ENCODE measurements at regions of chr2 and their contacts with region 1.

Region 1: DNA sequence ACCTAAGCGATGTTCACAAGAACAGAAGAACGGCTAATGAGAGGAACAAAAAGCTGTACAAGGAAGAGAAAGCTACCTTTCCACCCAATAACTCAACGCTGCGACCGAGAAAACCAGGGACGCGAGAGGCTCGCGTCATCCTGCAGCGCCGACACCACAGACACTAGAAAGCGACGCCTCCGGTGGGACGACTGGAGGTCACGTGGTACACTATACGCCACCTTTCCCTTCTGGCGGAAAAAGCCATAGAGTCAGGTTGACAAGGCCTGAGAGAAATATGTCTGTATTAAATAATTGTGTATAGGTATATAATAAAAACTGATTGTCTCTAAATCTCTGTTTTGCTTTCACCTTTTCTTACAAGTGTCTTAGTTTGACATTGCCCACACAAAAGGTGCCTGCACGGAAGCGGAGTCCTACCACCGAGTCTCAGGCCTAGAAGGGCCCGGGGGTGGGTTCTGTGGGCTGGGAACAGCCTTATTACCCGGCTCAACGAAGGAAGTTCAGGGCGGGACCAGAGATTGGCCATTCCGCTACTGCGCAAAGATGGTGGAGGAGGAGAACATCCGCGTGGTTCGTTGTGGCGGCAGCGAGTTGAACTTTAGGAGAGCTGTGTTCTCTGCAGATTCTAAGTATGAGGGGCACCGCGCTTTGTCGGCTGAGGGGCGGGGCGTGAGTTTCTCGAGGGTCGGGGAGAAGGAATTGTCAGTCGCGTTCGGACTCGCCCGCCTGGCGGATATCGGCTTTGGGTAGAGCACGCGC is at the start of gene WDR75:
- DNase-seq: peak; percentile 79
- ATAC-seq: peak; percentile 94
- H3K4me3 Mint-ChIP-seq: peak within 1 kb of the TSS; percentile 98
- H3K27ac Mint-ChIP-seq: peak within 1 kb of the TSS; percentile 99
- H3K4me1 Mint-ChIP-seq: peaks cover 26% of the 10 kb centered on the region
- H3K27me3 Mint-ChIP-seq: no peaks in the 10 kb centered on the region
- CTCF ChIP-seq: no peak
- total RNA-seq, gene WDR75: 53.0 and 61.2 TPM in 2 replicates

Region 2: GRCh38 chr2:189580658-189581353 is 139.7 kb after region 1 on chr2 and contains the start of gene SLC40A1:
- CTCF ChIA-PET with region 1: no interaction called
- POLR2A ChIA-PET with region 1: no interaction called
- intact Hi-C with region 1: loop called (anchors 1 kb)
- DNase-seq: peak; percentile 24
- ATAC-seq: peak; percentile 95
- H3K4me3 Mint-ChIP-seq: peak within 1 kb of the TSS; percentile 69
- H3K27ac Mint-ChIP-seq: no peak within 1 kb of the TSS
- H3K4me1 Mint-ChIP-seq: peaks cover 20% of the 10 kb centered on the region
- H3K27me3 Mint-ChIP-seq: peaks cover 36% of the 10 kb centered on the region
- CTCF ChIP-seq: no peak
- total RNA-seq, gene SLC40A1: 0.12 and 0.20 TPM in 2 replicates

Region 3: GRCh38 chr2:189674374-189675112 is 233.4 kb after region 1 on chr2 and contains the start of gene ANKAR:
- CTCF ChIA-PET with region 1: no interaction called
- POLR2A ChIA-PET with region 1: no interaction called
- intact Hi-C with region 1: no loop called
- DNase-seq: peak; percentile 89
- ATAC-seq: peak; percentile 97
- H3K4me3 Mint-ChIP-seq: peak within 1 kb of the TSS; percentile 96
- H3K27ac Mint-ChIP-seq: peak within 1 kb of the TSS; percentile 99
- H3K4me1 Mint-ChIP-seq: peaks cover 38% of the 10 kb centered on the region
- H3K27me3 Mint-ChIP-seq: no peaks in the 10 kb centered on the region
- CTCF ChIP-seq: peak; percentile 67
- total RNA-seq, gene ANKAR: 13.1 and 14.5 TPM in 2 replicates